AG04449 (cell line): ENCODE measurements at regions of chr4 and their contacts with region 1.

Region 1: DNA sequence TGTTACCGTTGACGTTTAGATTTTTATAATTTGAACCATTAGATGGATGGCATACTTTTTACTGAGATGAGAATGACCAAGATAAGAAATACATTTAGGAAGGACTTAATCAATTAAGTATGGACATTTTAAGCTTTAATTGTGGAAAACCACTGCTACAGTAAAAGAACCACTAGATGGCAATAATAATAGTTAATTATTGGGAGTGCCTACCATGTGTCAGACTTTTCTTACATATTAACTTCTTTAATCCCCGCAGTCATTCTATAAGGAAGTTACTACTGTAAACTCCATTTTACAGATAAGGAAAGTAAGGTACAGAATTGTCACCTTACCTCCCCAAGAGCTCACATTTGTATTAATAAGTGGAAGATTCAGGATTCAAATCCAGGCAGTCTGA is 48.5 kb upstream of the MYOZ2 start:
- DNase-seq: no peak
- H3K4me3 ChIP-seq: no peak overlapping the region
- CTCF ChIP-seq: peak; percentile 2

Region 2: GRCh38 chr4:119099227-119099801 is 12.2 kb after region 1 on chr4:
- CTCF ChIA-PET with region 1: interaction called, 12 read pairs
- POLR2A ChIA-PET with region 1: interaction called, 3 read pairs
- DNase-seq: peak; percentile 47
- H3K4me3 ChIP-seq: no peak overlapping the region
- CTCF ChIP-seq: no peak

Region 3: DNA sequence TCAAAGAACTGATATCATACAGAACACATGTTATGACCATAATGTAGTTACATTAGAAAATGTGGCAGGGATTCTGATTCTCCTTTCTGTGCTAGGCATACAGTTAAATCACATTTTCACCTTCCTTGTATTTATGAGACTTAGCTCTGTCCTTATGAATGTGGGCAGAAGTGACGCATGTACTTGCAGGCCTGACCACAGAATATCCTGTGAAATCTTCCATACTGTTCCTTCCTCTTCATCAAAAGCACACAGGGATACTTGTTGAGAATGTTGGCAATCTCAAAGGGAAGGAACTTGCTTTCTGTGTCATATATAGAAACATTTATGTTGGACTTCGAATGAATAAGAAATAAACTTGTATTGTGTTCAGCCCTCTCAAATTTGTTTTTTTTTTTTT is 31.3 kb after region 1 on chr4:
- CTCF ChIA-PET with region 1: no interaction called
- POLR2A ChIA-PET with region 1: no interaction called
- DNase-seq: no peak
- H3K4me3 ChIP-seq: no peak overlapping the region
- CTCF ChIP-seq: no peak